Activated CD4-positive, alpha-beta T cell treated with anti-CD3 and anti-CD28 coated beads for 36 hours (primary cell): ENCODE measurements at regions of chr10 and their contacts with region 1.

Region 1: DNA sequence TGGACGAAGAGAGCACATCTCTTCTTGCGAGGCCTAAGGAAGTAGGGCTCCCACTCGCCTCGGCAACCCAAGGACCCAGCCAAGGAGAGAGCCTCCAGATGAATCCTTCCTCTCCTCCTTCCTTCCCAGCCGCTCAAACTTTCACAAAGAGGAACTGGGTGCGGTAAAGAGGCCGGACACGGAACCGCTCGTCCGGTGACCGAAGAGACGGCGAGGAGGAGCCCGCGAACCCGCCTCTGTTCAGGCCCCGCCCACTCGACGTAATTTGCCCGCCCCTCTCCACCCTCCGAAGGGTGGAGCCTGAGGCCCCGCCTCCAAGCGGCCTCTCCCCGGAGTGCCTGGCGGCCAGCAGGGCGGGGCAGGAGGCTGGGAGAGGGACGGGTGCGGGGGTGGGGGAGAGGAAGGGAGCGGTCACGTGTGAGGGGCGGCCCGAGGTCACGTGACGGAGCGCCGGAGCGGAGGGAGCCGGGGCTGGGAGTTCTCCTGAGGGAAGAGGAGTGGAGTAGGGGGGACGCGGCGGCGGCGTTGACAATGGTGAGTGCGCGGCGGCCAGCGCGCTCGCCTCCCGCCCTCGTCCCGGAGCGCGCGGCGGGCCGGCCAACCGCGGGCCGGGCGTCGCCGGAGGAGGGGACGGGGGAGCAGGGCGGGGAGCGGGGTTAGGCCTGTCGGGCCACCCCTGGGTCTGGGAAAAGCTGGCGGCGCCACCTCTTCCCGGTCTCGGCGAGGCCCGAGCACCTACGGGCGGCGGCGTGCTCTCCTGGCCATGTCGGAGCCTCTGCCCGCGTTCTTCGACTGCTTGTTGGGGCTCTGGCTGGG is at the start of gene VPS26A:
- DNase-seq: peak; percentile 100
- ATAC-seq: peak; percentile 95
- H3K4me3 Mint-ChIP-seq: peak within 1 kb of the TSS; percentile 90
- H3K27ac Mint-ChIP-seq: peak within 1 kb of the TSS; percentile 91
- H3K4me1 Mint-ChIP-seq: peaks cover 31% of the 10 kb centered on the region
- H3K27me3 Mint-ChIP-seq: no peaks in the 10 kb centered on the region
- total RNA-seq, gene VPS26A: 27.1 to 32.2 TPM

Region 2: DNA sequence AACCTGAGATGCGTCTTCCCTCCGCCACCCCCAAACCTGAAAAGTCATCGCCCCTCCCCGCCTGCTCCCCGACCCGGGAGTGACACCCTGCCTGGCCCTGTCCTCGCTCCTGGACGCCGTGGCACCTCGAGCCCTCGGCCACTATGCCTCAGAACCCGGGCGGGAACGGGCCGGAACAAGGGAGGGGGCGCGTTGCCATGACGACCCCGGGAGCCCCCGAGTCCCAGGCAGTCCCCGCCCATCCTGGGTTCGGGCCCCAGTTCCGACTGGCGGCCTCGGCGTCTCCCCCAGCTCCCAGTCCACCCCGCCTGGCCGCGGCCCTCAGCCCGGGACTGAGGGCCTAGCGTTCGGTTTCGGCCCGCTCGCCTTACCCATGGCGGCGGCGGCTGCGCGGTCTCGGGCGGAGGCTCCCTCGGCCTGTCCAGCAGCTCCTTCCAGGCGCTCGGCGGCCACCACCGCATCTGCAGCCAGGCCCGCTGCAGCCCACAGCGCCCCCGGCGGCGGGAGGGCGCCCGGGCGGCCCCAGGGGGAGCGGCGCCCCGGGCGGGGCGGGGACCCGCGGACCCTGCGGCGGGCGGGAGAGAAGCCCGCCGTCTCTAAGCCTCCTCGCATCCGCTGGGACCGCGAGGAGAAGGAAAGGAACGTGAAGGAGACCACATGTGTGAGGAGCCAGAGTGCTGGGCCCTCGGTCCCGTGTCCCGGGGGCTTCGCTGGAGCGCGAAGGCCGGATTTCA is 717.0 kb before region 1 on chr10 and contains the start of gene RUFY2:
- CTCF ChIA-PET with region 1: no interaction called
- POLR2A ChIA-PET with region 1: no interaction called
- intact Hi-C with region 1: loop called in 1 of 2 experiments (anchors 1 kb)
- DNase-seq: peak; percentile 86
- ATAC-seq: peak; percentile 95
- H3K4me3 Mint-ChIP-seq: peak within 1 kb of the TSS; percentile 83
- H3K27ac Mint-ChIP-seq: peak within 1 kb of the TSS; percentile 76
- H3K4me1 Mint-ChIP-seq: peaks cover 19% of the 10 kb centered on the region
- H3K27me3 Mint-ChIP-seq: no peaks in the 10 kb centered on the region
- total RNA-seq, gene RUFY2: 9.1 to 9.5 TPM

Region 3: DNA sequence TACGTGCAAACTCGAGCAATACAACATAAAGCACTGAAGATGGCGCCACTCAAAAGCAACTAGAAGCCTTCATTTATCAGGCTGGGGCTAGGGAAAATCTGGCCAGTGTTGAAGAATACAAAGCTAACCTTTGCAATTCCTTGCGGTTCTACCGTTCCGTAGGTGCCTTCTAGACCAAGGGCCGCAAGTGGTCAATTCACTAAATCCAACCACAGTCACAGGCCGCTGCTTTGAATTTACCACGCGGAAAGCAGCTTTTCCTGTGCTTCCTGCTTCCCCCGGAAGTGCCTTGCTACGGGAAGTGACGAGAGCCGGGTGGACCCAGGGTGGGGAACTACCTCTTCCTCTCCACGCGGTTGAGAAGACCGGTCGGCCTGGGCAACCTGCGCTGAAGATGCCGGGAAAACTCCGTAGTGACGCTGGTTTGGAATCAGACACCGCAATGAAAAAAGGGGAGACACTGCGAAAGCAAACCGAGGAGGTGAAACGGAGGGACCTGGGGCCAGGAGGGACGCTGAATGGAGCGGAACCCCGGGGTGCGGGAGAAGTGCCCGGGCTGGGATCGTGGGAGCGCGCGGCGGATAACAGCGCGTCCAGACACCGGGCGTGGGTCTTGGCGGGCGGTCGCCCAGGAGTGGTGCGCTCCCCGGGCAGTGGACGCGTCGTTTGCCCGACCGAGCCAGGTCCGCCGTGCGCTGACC is 168.0 kb before region 1 on chr10 and contains the start of gene DDX21:
- CTCF ChIA-PET with region 1: interaction called, 4 read pairs
- POLR2A ChIA-PET with region 1: interaction called, 3 read pairs
- intact Hi-C with region 1: loop called (anchors 1 to 2 kb)
- DNase-seq: peak; percentile 94
- ATAC-seq: peak; percentile 85
- H3K4me3 Mint-ChIP-seq: peak within 1 kb of the TSS; percentile 98
- H3K27ac Mint-ChIP-seq: peak within 1 kb of the TSS; percentile 100
- H3K4me1 Mint-ChIP-seq: peaks cover 35% of the 10 kb centered on the region
- H3K27me3 Mint-ChIP-seq: no peaks in the 10 kb centered on the region
- total RNA-seq, gene DDX21: 187 to 192 TPM

Region 4: DNA sequence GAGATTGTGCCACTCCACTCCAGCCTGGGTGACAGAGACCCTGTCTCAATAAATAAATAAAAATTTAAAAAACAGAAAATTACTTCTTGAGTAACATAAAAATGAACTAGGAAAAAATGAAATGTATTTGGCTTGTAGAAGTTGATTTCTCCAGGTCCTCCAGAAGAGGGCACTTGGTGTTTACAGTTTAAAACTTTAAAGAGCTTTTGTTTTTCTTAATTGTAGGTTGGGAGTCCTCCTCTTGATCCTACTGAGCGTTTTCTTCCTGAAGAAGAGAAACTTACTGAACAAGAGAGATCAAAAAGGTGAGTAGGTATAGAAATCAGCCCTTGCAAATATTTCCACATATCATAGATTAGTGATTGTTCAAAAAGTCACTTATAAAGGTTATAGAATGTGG is 119.1 kb before region 1 on chr10:
- CTCF ChIA-PET with region 1: interaction called, 26 read pairs
- POLR2A ChIA-PET with region 1: interaction called, 9 read pairs
- intact Hi-C with region 1: loop called (anchors 1 kb)
- DNase-seq: no peak
- ATAC-seq: peak; percentile 78
- H3K4me3 Mint-ChIP-seq: no peak overlapping the region
- H3K27ac Mint-ChIP-seq: no peak overlapping the region
- H3K4me1 Mint-ChIP-seq: peaks cover 10% of the 10 kb centered on the region
- H3K27me3 Mint-ChIP-seq: no peaks in the 10 kb centered on the region

Region 5: DNA sequence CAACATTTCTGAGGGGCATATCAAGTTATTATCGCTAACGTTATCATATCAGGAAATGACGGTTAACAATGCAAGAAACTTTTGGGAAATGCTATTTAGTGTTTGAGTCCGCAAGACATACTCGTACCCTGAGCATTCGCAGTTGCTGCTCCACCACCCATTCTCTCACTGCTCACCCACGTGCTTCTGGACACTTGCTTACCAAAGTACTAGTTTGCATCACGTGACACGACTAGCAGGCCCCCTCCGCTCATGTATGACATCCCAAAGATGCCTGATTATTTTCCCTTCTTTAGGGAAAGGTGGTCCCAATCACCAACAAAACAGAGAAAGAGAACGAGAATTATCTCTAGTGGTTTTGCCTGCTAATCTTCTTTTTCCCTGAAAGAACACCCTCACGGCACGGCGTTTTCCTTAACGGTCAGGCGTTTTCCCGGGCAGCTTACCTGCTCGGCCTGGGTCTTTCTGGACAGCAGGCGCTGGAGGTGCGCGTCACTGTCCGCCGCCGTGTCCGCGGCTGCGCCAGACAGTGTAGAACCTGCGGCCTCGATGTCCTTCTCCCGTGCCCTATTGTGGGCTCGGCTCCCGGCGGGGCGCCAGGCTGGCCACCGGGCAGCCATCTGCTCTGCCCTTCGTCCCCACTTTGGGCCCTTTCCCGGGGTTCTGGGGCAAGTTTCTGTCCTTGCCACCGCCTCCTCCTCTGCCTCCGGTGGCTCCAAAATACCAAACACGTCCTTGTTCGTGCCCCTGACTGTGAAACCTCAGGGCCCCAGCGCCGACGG is 56.0 kb after region 1 on chr10 and contains the start of gene SUPV3L1:
- CTCF ChIA-PET with region 1: no interaction called
- POLR2A ChIA-PET with region 1: no interaction called
- intact Hi-C with region 1: loop called (anchors 1 to 2 kb)
- DNase-seq: peak; percentile 91
- ATAC-seq: peak; percentile 89
- H3K4me3 Mint-ChIP-seq: peak within 1 kb of the TSS; percentile 90
- H3K27ac Mint-ChIP-seq: peak within 1 kb of the TSS; percentile 100
- H3K4me1 Mint-ChIP-seq: peaks cover 38% of the 10 kb centered on the region
- H3K27me3 Mint-ChIP-seq: no peaks in the 10 kb centered on the region
- total RNA-seq, gene SUPV3L1: 46.6 to 54.1 TPM

Region 6: DNA sequence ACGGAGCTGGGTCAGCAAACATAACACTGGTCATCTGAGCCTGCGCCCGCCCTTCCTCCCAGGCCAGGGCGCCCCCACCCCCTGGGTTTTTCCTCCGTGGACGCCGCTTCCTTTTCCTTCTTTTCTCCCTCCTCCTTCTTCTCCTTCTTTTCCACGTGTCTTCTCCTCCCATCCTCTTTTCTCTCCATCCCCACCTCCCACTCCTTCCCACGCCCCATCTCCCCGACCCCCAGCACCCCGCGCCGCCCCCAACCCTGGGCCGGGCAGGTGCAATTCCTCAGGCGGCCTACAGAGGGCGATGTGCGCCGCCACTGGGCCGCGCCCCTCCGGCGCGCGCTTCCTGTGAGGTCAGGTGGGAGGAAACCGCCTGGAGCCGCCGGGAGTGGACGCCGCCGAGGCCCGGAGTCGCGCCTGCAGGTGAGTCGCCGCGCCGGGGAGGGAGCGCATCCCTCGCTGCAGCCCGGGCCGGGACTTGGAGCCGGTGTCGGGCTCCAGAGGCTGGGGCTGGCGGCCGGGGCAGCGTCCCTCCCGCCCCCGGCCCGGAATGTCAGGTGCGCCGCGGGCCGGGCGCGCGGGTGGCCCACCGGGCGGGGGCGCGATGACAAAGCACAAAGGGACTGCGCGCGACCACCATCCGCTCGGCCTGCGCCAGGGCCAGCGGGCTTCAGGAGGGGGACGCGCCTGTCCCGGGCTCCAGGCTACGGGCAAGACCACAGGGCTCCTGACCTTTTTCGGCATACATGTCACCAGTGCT is 506.1 kb after region 1 on chr10 and contains the start of gene FAM241B:
- CTCF ChIA-PET with region 1: no interaction called
- POLR2A ChIA-PET with region 1: no interaction called
- intact Hi-C with region 1: loop called in 1 of 2 experiments (anchors 5 kb)
- DNase-seq: peak; percentile 89
- ATAC-seq: peak; percentile 95
- H3K4me3 Mint-ChIP-seq: peak within 1 kb of the TSS; percentile 63
- H3K27ac Mint-ChIP-seq: peak within 1 kb of the TSS; percentile 47
- H3K4me1 Mint-ChIP-seq: peaks cover 16% of the 10 kb centered on the region
- H3K27me3 Mint-ChIP-seq: no peaks in the 10 kb centered on the region
- total RNA-seq, gene FAM241B: 6.3 to 9.6 TPM